Thyroid gland (tissue), 4 donors: ENCODE measurements at regions of chr12 and their contacts with region 1.

Region 1: DNA sequence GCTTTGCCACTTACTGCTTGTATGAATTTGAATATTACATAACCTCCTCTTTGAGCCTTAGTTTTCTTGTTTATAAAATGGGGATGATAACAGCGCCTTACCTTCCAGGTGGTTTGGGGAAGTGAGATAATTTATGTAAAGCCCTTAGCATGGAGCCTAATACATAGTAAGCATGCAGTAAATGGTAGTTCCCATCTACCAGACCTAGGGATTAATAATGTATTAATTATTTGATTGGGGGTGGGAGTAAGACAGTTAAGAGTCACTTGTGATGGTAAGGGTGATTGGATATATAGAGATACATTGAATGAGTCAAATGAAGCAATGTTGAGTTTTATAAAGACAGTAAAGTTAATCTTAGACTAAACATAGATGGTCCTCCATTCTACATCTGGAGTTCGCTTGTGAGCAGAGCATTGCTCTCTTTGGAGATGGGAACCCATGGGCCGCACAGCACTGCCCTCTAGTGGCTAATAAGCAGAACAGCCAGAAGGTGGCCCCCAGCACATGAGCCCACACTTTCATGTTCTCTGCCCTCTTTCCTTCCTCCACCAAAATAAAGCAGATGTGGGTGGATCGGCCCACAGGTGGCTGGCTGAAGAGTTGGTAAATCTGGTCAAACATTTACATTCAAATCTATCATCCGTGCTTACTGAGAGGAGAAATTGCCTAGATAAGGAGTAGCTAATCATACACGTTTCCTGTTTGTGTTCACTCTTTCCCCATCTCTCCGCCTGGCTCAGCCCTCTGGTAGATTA is 26.5 kb upstream of the TAMALIN start:
- DNase-seq: peak; percentile 63 to 68
- H3K4me3 ChIP-seq: no peak overlapping the region
- H3K27ac ChIP-seq: no peak overlapping the region
- H3K4me1 ChIP-seq: peaks cover 8 to 10% of the 10 kb centered on the region in 2 donors
- H3K27me3 ChIP-seq: no peaks in the 10 kb centered on the region
- CTCF ChIP-seq: peak; percentile 82 to 95 (median 92)
- POLR2A ChIP-seq: no peak

Region 2: DNA sequence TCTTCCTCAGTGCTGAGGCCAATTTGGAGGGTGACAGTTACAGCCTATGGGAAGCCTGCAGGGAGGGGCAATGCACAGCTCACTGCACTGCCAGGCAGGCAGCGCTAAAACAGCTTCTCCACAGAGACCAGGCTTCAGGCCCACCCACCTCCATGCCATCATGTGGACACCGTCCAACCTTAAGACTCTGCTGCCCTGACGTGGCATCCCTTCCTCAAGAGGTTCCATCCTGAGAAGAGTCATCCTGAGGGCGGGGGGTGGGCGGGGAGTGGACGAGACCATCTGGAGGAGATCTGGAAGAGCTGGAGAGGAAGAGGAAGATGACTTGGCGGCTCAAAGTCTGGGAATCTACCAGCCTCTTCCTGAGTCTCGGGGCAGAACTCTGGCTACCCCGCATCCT is 81.3 kb before region 1 on chr12:
- intact Hi-C with region 1: loop called (anchors 5 kb)
- DNase-seq: no peak
- H3K4me3 ChIP-seq: no peak overlapping the region
- H3K27ac ChIP-seq: no peak overlapping the region
- H3K4me1 ChIP-seq: peaks cover 0 to 17% of the 10 kb centered on the region in 2 donors
- H3K27me3 ChIP-seq: no peaks in the 10 kb centered on the region
- CTCF ChIP-seq: no peak
- POLR2A ChIP-seq: no peak

Region 3: DNA sequence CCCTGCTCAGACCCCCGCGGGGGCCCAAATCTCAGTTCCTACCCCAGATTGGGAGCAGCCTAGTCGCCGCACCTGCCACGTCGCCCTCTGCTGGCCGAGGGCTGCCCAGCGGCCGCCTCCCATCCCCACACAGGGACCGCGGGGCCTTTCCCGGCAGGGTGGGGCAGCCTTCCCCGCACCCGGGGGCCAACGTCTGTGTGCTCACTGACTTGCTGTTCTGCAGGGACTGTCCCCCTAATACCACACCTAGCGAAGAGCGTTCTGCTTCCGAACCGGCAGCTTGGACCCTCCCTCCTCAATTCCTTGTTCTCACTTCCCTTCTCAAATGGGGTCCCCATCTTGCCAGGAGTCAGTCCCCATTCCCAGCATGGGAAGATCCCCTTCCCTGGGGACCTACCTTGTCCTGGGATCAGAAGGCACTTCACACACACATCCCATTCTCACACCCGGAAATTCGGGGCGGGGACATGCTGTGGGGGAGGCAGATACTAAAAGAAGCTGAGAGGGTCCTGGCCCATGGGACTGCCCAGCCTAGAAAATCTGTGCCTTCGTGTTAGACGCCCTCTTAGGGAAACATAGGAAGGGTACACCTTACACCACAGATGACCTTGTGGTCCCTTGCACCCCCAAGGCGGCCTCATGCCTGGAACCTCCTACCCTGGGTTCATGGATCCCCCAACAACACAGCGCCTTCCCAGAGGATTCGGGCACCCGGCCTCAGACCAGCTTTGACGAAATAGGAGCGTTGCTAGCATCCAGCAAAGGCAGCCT is 56.5 kb before region 1 on chr12:
- intact Hi-C with region 1: loop called (anchors 10 kb)
- DNase-seq: peak; percentile 42 to 50
- H3K4me3 ChIP-seq: no peak overlapping the region
- H3K27ac ChIP-seq: peak overlapping the region in 2 of 3 donors; percentile 52 to 68
- H3K4me1 ChIP-seq: peaks cover 11 to 20% of the 10 kb centered on the region in 2 donors
- H3K27me3 ChIP-seq: no peaks in the 10 kb centered on the region
- CTCF ChIP-seq: peak; percentile 46 to 92 (median 64)
- POLR2A ChIP-seq: no peak

Region 4: DNA sequence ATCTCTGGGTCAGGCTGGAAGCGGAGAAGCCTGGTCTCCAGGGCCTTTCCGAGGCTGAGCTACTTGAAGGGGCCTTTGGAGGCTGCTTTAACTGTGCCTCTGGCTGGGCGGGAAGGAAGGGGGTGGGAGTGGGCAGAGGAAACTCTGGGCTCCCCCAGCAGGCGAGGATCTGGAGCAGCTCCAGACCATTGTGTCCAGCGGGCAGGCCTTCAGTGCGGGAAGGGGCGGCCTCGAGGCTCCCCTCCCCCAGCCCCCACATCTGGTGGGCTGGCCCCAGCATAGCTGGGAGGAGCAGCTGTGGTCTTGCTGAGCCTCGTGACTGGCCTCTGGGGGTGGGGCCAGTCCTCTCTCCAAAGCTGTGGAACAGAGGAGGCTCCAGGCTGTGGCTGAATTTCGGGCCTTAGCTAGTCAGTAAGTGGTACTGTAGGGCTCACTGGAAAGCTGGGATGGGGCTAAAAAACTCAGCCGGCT is 30.0 kb after region 1 on chr12:
- intact Hi-C with region 1: no loop called
- DNase-seq: peak; percentile 63 to 74
- H3K4me3 ChIP-seq: peak overlapping the region in 1 of 3 donors; percentile 67
- H3K27ac ChIP-seq: peak overlapping the region; percentile 51 to 80 (median 78)
- H3K4me1 ChIP-seq: peaks cover 7 to 21% of the 10 kb centered on the region in 2 donors
- H3K27me3 ChIP-seq: no peaks in the 10 kb centered on the region
- CTCF ChIP-seq: no peak
- POLR2A ChIP-seq: peak in 1 of 2 donors; percentile 17